HEK293 (cell line): ENCODE measurements at regions of chr11 and their contacts with region 1.

Region 1: DNA sequence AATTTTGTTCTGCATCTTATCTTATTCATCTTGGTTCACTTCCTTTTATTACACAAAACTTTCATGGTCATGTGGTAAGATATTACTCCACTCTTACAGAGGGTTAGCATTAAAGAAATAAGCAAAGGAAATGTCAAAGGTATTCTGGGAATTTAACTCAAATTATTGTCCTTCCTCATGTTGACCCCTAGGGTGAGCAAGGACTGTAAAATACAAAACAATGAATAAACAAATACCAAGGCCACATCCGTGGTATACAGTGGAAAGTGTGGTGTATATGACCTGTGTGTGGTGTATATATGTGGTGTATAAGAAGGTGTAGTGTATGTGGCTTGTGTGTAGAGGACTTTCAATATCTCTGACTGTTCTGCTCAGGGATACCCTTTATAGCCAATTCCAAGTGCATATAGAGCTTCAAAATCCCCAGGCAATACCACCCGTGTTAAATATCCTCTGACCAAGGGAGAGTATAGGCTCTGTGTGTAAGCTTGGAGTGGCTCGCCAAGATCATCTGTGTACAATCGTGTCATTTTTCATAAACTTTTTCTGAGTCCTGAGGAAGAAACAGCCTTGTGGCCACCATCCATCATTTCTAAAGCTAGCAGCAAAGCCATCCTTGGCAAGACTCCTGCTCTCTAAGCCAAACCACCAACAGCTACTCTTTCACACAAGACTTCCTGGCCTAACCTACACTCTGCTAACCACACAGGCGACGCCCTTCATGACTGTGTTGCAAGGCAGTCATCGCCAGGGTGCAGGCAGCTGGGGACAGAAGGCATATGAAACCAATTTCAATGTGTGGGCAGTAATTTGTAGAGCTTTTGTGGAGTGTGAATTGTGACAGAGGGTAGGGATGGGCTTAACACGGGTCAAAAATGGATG is 548.0 kb downstream of the ETS1 start:
- H3K4me3 ChIP-seq: no peak overlapping the region
- H3K27ac ChIP-seq: no peak overlapping the region
- H3K4me1 ChIP-seq: no peaks in the 10 kb centered on the region
- CTCF ChIP-seq: no peak

Region 2: GRCh38 chr11:127993281-127993680 is 46.1 kb before region 1 on chr11:
- CTCF ChIA-PET with region 1: no interaction called
- POLR2A ChIA-PET with region 1: no interaction called
- H3K4me3 ChIP-seq: no peak overlapping the region
- H3K27ac ChIP-seq: no peak overlapping the region
- H3K4me1 ChIP-seq: no peaks in the 10 kb centered on the region
- CTCF ChIP-seq: no peak

Region 3: DNA sequence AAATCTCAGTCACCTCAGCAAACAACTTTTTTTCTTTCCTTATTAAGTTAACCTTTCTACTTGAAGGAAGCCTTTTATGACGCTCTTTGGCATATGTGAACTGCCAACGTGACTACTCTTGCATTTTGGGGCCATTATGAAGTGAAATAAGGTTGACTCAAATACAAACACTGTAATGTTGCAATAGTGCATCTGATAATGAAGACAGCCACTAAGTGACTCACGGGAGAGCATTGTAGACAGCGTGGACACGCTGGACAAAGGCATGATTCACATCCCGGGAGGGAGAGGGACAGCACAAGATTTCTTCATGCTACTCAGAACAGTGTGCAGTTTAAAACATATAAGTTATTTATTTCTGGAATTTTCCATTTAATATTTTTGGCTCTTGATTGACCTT is 12.8 kb before region 1 on chr11:
- CTCF ChIA-PET with region 1: interaction called, 11 read pairs
- POLR2A ChIA-PET with region 1: no interaction called
- H3K4me3 ChIP-seq: no peak overlapping the region
- H3K27ac ChIP-seq: no peak overlapping the region
- H3K4me1 ChIP-seq: no peaks in the 10 kb centered on the region
- CTCF ChIP-seq: no peak